ENCODE measurements at regions of chr4 and their contacts with region 1.

Region 1: GRCh38 chr4:139361301-139361700 is 59.0 kb upstream of the NDUFC1 start:
- DNase-seq: no peak
- H3K4me3 Mint-ChIP-seq: no peak overlapping the region
- H3K27ac Mint-ChIP-seq: no peak overlapping the region
- H3K4me1 Mint-ChIP-seq: peaks cover 2% of the 10 kb centered on the region
- H3K27me3 Mint-ChIP-seq: no peaks in the 10 kb centered on the region

Region 2: DNA sequence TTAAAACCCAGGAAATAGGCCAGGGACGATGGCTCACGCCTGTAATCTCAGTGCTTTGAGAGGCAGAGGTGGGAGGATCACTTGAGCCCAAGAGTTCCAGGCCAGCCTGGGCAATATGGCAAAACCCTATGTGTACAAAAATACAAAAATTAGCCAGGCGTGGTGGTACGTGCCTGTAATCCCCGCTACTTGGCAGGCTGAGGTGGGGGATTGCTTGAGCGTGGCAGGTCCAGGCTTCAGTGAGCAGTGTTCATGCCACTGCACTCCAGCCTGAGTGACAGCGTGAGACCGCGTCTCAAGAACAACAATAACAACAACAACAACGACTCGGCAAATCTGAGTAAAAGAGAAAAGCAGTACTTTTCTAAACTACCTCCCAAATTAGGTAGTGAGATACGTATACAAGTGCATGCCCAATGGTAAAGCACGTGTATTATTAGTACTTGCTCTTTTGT is 46.1 kb before region 1 on chr4:
- intact Hi-C with region 1: no loop called
- DNase-seq: peak; percentile 55
- H3K4me3 Mint-ChIP-seq: peak overlapping the region; percentile 19
- H3K27ac Mint-ChIP-seq: no peak overlapping the region
- H3K4me1 Mint-ChIP-seq: peaks cover 55% of the 10 kb centered on the region
- H3K27me3 Mint-ChIP-seq: no peaks in the 10 kb centered on the region

Region 3: GRCh38 chr4:139403462-139403861 is 42.2 kb after region 1 on chr4:
- intact Hi-C with region 1: loop called (anchors 5 kb)
- DNase-seq: no peak
- H3K4me3 Mint-ChIP-seq: no peak overlapping the region
- H3K27ac Mint-ChIP-seq: no peak overlapping the region
- H3K4me1 Mint-ChIP-seq: no peaks in the 10 kb centered on the region
- H3K27me3 Mint-ChIP-seq: no peaks in the 10 kb centered on the region